ENCODE measurements at regions of chr1 and their contacts with region 1.

Region 1: DNA sequence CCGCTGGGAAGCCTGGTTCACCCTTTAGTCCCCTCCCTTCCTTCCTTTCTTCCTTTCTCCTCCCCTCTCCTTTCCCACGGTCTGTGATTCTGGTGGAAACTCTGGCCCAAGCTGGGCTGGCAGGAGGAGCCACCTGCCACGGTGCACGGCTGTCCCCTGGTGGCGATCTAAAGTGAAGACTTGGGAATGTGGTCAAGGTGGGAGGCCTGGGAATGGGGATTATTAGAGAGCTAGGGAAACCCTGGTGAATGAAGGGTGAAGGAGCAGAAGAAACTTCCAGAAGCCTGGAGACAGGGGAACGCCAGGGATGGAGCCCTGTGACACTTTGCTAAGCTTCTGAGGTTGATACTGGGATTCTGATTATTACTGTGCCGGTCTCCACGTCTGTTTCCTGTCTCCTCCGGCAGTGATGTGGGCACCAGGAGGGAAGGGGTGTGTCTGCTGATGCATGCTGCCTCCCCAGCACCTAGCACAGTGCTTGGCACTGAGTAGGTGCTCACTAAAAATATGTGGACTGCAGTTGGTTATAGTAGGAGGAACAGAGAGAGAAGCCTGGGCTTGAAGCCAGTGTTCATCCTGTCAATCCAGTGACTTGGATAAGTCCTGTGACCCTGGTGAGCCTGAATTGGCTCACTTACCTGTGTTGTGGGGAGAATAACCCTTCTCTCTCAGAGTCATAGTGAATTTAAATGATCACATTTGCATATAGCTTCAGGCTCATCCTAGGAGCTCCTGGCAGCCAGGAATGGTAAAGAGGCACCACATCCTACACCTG is 71.2 kb upstream of the NBPF3 start:
- DNase-seq: peak; percentile 85
- ATAC-seq: peak; percentile 85
- H3K4me3 Mint-ChIP-seq: no peak overlapping the region
- H3K27ac Mint-ChIP-seq: no peak overlapping the region
- H3K4me1 Mint-ChIP-seq: 0 out of 2 replicates have a peak, but pooled peaks cover 3% of the 10 kb centered on the region
- H3K27me3 Mint-ChIP-seq: no peaks in the 10 kb centered on the region
- CTCF ChIP-seq: peak; percentile 91

Region 2: GRCh38 chr1:21175670-21176581 is 192.8 kb before region 1 on chr1:
- CTCF ChIA-PET with region 1: no interaction called
- POLR2A ChIA-PET with region 1: no interaction called
- DNase-seq: peak; percentile 35
- ATAC-seq: peak; percentile 9; the same call in 1 of the 2 replicates
- H3K4me3 Mint-ChIP-seq: peak overlapping the region; percentile 82
- H3K27ac Mint-ChIP-seq: peak overlapping the region; percentile 8; the same call in 1 of the 2 replicates
- H3K4me1 Mint-ChIP-seq: peaks cover 18% of the 10 kb centered on the region
- H3K27me3 Mint-ChIP-seq: peaks cover 29% of the 10 kb centered on the region
- CTCF ChIP-seq: no peak

Region 3: GRCh38 chr1:21238141-21238800 is 130.4 kb before region 1 on chr1:
- CTCF ChIA-PET with region 1: interaction called, 115 read pairs
- POLR2A ChIA-PET with region 1: no interaction called
- DNase-seq: no peak
- ATAC-seq: no peak
- H3K4me3 Mint-ChIP-seq: no peak overlapping the region
- H3K27ac Mint-ChIP-seq: 0 out of 2 replicates have a peak overlapping the region, but pooled peaks have one; percentile 36
- H3K4me1 Mint-ChIP-seq: peaks cover 14% of the 10 kb centered on the region
- H3K27me3 Mint-ChIP-seq: no peaks in the 10 kb centered on the region
- CTCF ChIP-seq: no peak

Region 4: GRCh38 chr1:21270086-21270689 is 98.5 kb before region 1 on chr1:
- CTCF ChIA-PET with region 1: interaction called, 119 read pairs
- POLR2A ChIA-PET with region 1: interaction called, 7 read pairs
- DNase-seq: peak; percentile 96
- ATAC-seq: peak; percentile 96
- H3K4me3 Mint-ChIP-seq: no peak overlapping the region
- H3K27ac Mint-ChIP-seq: no peak overlapping the region
- H3K4me1 Mint-ChIP-seq: peaks cover 2% of the 10 kb centered on the region; the same call in 1 of the 2 replicates
- H3K27me3 Mint-ChIP-seq: no peaks in the 10 kb centered on the region
- CTCF ChIP-seq: peak; percentile 96

Region 5: GRCh38 chr1:21324368-21325141 is 44.1 kb before region 1 on chr1:
- CTCF ChIA-PET with region 1: interaction called, 22 read pairs
- POLR2A ChIA-PET with region 1: no interaction called
- DNase-seq: no peak
- ATAC-seq: no peak
- H3K4me3 Mint-ChIP-seq: no peak overlapping the region
- H3K27ac Mint-ChIP-seq: peak overlapping the region; percentile 79
- H3K4me1 Mint-ChIP-seq: peaks cover 95% of the 10 kb centered on the region
- H3K27me3 Mint-ChIP-seq: no peaks in the 10 kb centered on the region
- CTCF ChIP-seq: no peak

Region 6: GRCh38 chr1:21384620-21385019 is 15.9 kb after region 1 on chr1:
- CTCF ChIA-PET with region 1: interaction called, 18 read pairs
- POLR2A ChIA-PET with region 1: no interaction called
- DNase-seq: no peak
- ATAC-seq: no peak
- H3K4me3 Mint-ChIP-seq: no peak overlapping the region
- H3K27ac Mint-ChIP-seq: no peak overlapping the region
- H3K4me1 Mint-ChIP-seq: peaks cover 22% of the 10 kb centered on the region
- H3K27me3 Mint-ChIP-seq: no peaks in the 10 kb centered on the region; the same call in 1 of the 2 replicates
- CTCF ChIP-seq: no peak

Region 7: GRCh38 chr1:21573971-21574465 is 205.3 kb after region 1 on chr1:
- CTCF ChIA-PET with region 1: interaction called, 22 read pairs
- POLR2A ChIA-PET with region 1: no interaction called
- DNase-seq: peak; percentile 83
- ATAC-seq: peak; percentile 73
- H3K4me3 Mint-ChIP-seq: no peak overlapping the region
- H3K27ac Mint-ChIP-seq: no peak overlapping the region; the same call in 1 of the 2 replicates
- H3K4me1 Mint-ChIP-seq: peaks cover 12% of the 10 kb centered on the region
- H3K27me3 Mint-ChIP-seq: no peaks in the 10 kb centered on the region
- CTCF ChIP-seq: no peak